Posterior vena cava (tissue), 2 donors: ENCODE measurements at regions of chr1 and their contacts with region 1.

Region 1: DNA sequence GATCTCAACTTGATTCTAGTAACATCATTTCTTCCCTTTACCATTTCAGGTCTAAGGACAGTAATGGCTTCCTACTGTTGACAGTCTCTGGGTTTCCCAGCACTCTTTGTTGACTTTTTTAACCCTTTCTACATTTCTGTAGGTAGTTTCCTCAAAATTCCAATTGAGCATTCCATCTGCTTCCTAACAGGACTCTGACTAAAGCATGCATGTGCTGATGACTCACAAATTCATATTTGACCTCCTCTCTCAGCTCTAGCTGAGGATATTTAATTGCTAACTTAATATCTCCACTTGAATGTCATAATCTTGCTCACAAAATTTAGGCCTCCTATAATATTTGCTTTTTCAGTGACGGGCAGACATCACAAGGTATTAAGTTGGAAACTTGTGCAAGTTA is 93.3 kb upstream of the ZNHIT6 start:
- DNase-seq: no peak

Region 2: GRCh38 chr1:85839459-85839858 is 37.9 kb after region 1 on chr1:
- intact Hi-C with region 1: loop called in 1 of 2 experiments (anchors 1 kb)
- DNase-seq: no peak